ENCODE measurements at regions of chr16 and their contacts with region 1.

Region 1: GRCh38 chr16:11232852-11233726 is 22.9 kb downstream of the SOCS1 start:
- DNase-seq: peak; percentile 98
- H3K4me3 Mint-ChIP-seq: peak overlapping the region; percentile 78
- H3K27ac Mint-ChIP-seq: peak overlapping the region; percentile 98
- H3K4me1 Mint-ChIP-seq: peaks cover 74% of the 10 kb centered on the region
- H3K27me3 Mint-ChIP-seq: no peaks in the 10 kb centered on the region

Region 2: DNA sequence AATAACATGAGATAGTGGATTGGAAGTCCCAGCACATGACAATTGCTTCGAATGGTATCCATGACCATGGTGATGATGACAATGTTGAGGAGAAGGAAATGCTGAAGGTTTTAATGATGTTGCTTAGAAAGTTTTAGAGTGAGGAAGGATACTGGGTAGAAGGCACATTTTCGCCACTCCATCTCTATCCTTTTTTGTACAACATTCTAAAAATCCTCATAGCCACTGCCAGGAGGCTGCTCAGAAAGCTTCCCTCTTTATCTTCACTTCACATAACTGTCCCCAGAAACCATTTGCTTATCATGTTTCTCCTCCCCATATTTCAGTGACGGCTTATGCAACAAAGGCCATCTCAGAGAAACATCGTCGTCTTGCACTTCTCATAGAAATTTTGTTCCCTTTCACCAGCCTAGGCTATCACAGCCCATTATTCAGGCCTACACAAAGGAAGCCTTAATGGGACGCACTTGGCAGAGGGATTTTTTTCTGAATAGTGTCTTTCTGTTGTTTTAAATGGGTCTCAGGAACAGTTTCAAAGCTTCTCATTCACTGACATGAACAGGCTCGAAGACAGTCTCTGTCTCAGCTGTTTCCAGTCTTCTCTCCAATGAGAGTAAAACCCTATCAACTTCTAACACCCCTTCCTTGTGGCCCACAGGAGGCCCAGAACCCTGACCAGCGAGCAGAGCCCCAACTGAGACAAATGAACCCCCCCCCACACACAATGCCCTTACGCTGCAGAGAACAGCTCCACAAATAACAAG is 1634.9 kb before region 1 on chr16:
- intact Hi-C with region 1: no loop called
- DNase-seq: no peak
- H3K4me3 Mint-ChIP-seq: no peak overlapping the region
- H3K27ac Mint-ChIP-seq: no peak overlapping the region
- H3K4me1 Mint-ChIP-seq: no peaks in the 10 kb centered on the region
- H3K27me3 Mint-ChIP-seq: no peaks in the 10 kb centered on the region

Region 3: DNA sequence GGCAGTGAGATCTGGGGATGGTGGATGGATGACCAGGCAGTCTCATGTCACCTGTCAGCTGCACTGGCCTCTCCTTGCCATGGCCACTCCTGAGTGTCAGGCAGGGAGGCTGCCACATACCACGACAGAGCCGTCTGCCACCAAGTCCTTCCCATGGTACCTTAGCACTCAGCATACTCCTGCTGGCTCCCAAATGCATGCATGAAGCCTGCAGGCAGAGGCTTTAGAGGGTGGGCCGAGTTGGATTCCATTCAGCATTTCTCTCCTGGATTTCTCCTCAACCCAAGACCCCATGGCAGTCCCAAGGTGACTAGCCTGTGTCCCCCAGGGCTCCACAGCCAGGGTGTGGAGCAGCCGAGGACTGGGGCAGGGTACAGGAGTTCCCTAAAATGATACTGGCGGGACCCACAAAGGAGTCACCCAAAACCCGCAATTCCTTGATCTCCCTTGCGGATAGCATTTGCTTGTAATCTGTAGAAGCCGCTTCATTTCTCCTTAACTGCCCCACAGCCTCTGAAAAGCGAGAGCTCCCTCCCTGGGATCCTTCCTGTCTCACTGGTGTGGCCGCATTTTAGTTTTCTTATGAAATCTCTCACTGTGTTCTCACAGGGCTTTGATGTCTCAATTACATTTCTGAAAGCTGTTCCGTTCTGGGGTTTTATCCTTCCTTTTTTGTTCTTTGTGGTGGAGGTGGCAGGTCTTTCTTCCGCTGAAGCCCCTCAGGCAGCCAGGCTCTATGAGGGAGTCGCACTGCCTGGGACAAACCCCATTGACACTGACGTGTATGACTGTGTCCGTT is 118.5 kb before region 1 on chr16:
- intact Hi-C with region 1: loop called (anchors 1 kb)
- DNase-seq: peak; percentile 87
- H3K4me3 Mint-ChIP-seq: peak overlapping the region; percentile 68
- H3K27ac Mint-ChIP-seq: peak overlapping the region; percentile 85
- H3K4me1 Mint-ChIP-seq: peaks cover 53% of the 10 kb centered on the region
- H3K27me3 Mint-ChIP-seq: no peaks in the 10 kb centered on the region

Measured in activated CD4-positive, alpha-beta T cell treated with anti-CD3 and anti-CD28 coated beads, Interleukin-2, amount 10 ng/mL, durations not matched to agents 24 days and 14 days (primary cell).